ENCODE measurements at regions of chrX and their contacts with region 1.

Region 1: DNA sequence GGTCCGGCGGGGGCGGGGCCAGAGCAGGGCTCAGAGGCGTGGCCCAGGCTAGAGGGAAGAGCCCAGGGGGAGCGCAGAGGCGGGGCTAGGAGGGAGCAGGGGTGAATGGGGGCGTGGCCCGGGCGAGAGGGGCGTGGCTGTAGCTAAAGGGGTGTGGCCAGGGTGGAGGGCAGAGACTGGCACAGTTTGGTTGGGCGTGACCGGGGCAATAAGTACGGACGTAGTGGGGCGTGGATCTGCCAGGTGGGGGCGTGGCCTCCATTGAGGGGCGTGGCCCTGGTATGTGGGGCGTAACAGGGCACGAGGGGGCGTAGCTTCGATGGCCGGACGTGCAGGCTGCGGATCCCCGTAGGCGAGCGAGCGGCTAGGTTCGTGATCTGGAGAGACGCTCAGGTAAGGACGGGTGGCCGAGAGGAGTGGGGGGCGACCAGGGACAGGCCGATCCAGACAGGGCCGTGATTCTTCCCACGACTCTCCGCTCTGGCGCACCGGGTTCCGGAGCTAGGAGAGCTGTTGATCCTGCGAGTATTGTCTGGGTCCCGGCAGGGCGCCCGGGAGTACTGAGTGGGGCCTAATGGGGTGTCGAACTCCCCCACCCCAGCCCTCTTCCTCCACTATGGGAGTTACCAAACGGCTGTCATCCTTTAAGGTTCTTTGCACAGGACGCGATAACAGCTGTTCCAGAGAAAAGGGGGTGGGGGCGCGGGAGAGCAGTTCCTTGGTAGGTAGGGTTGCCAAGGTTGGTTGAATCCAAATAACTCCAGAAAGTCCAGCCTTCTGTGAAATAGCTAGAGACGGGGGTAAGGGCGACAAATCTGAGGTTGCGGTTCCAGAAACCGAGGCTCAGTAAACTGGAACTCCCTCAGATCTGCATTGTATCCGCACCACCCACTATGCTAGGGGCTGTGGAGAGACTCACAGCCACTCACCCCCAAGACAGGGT is at the start of gene CA5B:
- DNase-seq: peak; percentile 97
- ATAC-seq: peak; percentile 94
- H3K4me3 Mint-ChIP-seq: peak within 1 kb of the TSS; percentile 88
- H3K27ac Mint-ChIP-seq: peak within 1 kb of the TSS; percentile 80
- H3K4me1 Mint-ChIP-seq: peaks cover 33% of the 10 kb centered on the region
- H3K27me3 Mint-ChIP-seq: no peaks in the 10 kb centered on the region
- CTCF ChIP-seq: no peak
- total RNA-seq, gene CA5B: 9.9 and 10.6 TPM in 2 replicates

Region 2: GRCh38 chrX:15749642-15750610 is 11.7 kb after region 1 on chrX:
- CTCF ChIA-PET with region 1: no interaction called
- POLR2A ChIA-PET with region 1: interaction called, 37 read pairs
- intact Hi-C with region 1: loop called (anchors 1 kb)
- DNase-seq: no peak
- ATAC-seq: peak; percentile 78
- H3K4me3 Mint-ChIP-seq: peak overlapping the region; percentile 58
- H3K27ac Mint-ChIP-seq: peak overlapping the region; percentile 98
- H3K4me1 Mint-ChIP-seq: peaks cover 58% of the 10 kb centered on the region
- H3K27me3 Mint-ChIP-seq: no peaks in the 10 kb centered on the region
- CTCF ChIP-seq: no peak

Region 3: DNA sequence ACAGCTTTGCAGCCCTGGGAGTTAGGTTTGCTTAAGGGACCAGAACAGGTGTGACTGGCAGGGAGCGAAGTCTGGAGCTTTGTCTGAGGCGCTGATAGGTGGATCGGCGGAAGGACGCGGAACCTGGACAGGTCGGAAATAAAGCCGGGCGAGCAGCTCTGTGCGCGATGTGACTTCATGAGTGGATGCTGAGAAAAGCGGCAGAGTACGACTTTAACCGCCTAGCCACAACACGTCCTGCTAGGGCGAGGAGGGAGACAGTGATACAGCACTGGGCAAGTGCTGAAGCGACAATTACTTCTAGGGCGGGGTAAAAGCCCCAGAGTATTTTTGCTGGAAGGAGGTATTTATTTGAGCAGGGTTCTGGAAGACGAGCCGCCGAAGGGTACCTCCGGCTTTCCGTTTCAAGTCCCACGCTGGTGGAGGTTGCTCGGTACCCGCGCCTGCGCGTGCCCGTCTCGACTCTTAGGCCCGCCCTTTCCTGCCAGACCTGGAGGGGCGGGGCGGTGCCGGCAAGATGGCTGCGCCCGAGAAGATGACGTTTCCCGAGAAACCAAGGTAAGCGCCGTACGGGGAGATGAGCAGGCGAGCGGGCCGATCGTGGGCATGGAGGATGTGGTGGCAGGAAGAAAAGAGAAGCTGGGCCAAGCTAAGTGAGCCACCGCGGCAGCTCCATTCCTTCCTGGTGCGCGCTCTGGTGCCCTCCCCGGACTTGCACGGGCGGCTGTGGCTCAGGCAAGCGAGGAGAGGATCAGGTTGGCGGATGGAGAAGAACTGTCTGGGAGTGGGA is 51.9 kb after region 1 on chrX and contains the start of gene ZRSR2:
- CTCF ChIA-PET with region 1: no interaction called
- POLR2A ChIA-PET with region 1: interaction called, 21 read pairs
- intact Hi-C with region 1: loop called (anchors 1 kb)
- DNase-seq: peak; percentile 76
- ATAC-seq: peak; percentile 93
- H3K4me3 Mint-ChIP-seq: no peak within 1 kb of the TSS
- H3K27ac Mint-ChIP-seq: peak within 1 kb of the TSS; percentile 35
- H3K4me1 Mint-ChIP-seq: peaks cover 18% of the 10 kb centered on the region
- H3K27me3 Mint-ChIP-seq: no peaks in the 10 kb centered on the region
- CTCF ChIP-seq: no peak
- total RNA-seq, gene ZRSR2: 19.8 and 20.9 TPM in 2 replicates

Region 4: GRCh38 chrX:16719334-16720084 is 981.3 kb after region 1 on chrX and contains the start of gene SYAP1:
- CTCF ChIA-PET with region 1: no interaction called
- POLR2A ChIA-PET with region 1: no interaction called
- intact Hi-C with region 1: loop called (anchors 5 kb)
- DNase-seq: peak; percentile 87
- ATAC-seq: peak; percentile 93
- H3K4me3 Mint-ChIP-seq: peak within 1 kb of the TSS; percentile 90
- H3K27ac Mint-ChIP-seq: peak within 1 kb of the TSS; percentile 94
- H3K4me1 Mint-ChIP-seq: peaks cover 15% of the 10 kb centered on the region
- H3K27me3 Mint-ChIP-seq: no peaks in the 10 kb centered on the region
- CTCF ChIP-seq: no peak
- total RNA-seq, gene SYAP1: 14.9 and 16.8 TPM in 2 replicates